Left lung (tissue), 14 donors: ENCODE measurements at regions of chr7 and their contacts with region 1.

Region 1: DNA sequence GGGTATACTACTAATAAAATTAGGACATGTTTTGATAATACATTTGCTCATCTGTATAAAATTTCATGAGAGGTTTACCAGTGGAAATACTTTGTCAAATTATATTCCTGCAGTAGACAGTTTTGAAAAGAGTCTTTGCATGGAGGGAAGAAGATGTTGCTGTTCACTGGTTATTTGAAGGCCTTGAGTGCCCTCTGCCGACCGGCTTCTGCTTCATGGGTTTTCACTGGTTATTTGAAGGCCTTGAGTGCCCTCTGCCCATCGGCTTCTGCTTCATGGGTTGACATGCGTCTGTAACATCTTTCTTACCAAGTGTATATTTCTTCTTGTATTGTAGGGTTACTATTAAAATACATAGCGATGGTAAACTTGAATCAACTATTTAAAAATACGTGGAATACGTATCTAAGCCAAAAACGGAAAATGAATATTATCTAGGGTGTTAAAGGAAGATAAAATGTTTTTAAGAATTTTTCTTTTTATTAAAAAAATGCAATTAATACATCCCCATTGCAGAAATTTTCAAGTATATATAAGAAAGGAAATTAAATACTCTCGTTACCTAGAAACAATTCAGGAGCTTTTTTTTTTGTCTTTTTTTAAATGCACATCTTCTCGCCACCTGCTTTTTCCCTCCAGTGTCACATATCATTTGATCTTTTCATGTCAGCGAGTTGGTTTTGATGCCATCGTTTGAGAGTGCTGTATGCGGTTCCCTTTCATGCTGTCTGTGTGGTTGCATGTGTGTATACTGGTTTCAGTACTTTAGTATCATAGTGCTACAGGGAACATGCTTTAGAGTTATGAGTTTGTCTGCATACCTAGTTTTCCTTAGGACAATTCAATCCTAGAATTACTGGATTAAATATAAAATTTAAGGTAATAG is 73.4 kb downstream of the SHH start:
- DNase-seq: peak in 3 of 4 donors; percentile 44 to 76 (median 69)
- ATAC-seq: peak; percentile 88
- H3K4me3 ChIP-seq: no peak overlapping the region
- H3K27ac ChIP-seq: no peak overlapping the region
- H3K4me1 ChIP-seq: peaks cover 0 to 11% of the 10 kb centered on the region in 2 donors
- H3K27me3 ChIP-seq: no peaks in the 10 kb centered on the region
- CTCF ChIP-seq: peak; percentile 35 to 56

Region 2: GRCh38 chr7:155598810-155599210 is 140.1 kb before region 1 on chr7:
- intact Hi-C with region 1: loop called in 1 of 2 experiments (anchors 5 kb)
- DNase-seq: peak; percentile 68 to 94 (median 78)
- ATAC-seq: peak; percentile 87
- H3K4me3 ChIP-seq: no peak overlapping the region
- H3K27ac ChIP-seq: no peak overlapping the region
- H3K4me1 ChIP-seq: peaks cover 0 to 37% of the 10 kb centered on the region in 2 donors
- H3K27me3 ChIP-seq: peaks cover 0 to 12% of the 10 kb centered on the region in 2 donors
- CTCF ChIP-seq: peak; percentile 97 to 99

Region 3: DNA sequence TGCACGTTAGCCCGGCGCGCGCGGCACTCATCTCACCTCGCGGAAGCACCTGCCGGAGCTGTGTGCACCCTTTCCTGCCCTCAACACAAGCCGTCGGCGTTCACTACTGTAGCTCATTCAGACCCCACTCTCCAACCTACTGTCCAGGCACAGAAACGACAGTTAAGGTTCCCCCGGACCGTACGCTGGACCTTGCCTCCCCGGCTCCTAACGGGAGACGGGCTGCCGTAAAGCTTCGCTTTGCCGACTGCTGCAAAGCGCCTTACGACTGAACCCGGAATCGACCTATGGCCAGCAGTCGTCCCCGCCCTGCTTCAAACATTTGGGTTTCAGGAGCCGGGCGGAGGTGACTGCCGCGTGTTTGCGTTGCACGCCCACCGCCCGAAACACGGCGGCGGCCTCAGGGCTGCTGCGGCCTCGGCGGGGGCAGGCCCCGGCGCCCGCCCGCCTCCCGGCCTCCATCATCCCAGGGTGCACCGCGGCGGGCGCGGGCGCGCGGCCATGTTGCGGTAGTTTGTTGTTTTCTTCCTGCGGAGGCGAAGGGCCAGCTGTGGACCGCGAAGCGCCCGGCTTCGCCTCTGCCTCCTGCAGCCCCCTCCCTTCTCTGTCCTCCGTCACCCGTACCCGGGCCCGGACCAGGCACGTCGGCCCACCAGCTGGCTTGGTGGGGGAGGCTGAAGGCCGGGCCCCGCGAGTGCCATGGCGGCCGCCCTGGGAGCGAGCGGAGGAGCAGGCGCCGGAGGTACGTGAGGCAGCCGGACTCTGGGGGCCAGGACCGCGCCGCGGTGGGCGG is 94.5 kb before region 1 on chr7 and contains the start of gene RBM33:
- intact Hi-C with region 1: loop called in 1 of 2 experiments (anchors 10 kb)
- DNase-seq: peak; percentile 80 to 94 (median 84)
- ATAC-seq: peak; percentile 95
- H3K4me3 ChIP-seq: peak within 1 kb of the TSS; percentile 98
- H3K27ac ChIP-seq: peak within 1 kb of the TSS; percentile 95
- H3K4me1 ChIP-seq: peaks cover 9 to 37% of the 10 kb centered on the region in 2 donors
- H3K27me3 ChIP-seq: no peaks in the 10 kb centered on the region
- CTCF ChIP-seq: no peak
- polyA plus RNA-seq, gene RBM33: 35.2 to 56.4 (median 44.5) TPM

Region 4: DNA sequence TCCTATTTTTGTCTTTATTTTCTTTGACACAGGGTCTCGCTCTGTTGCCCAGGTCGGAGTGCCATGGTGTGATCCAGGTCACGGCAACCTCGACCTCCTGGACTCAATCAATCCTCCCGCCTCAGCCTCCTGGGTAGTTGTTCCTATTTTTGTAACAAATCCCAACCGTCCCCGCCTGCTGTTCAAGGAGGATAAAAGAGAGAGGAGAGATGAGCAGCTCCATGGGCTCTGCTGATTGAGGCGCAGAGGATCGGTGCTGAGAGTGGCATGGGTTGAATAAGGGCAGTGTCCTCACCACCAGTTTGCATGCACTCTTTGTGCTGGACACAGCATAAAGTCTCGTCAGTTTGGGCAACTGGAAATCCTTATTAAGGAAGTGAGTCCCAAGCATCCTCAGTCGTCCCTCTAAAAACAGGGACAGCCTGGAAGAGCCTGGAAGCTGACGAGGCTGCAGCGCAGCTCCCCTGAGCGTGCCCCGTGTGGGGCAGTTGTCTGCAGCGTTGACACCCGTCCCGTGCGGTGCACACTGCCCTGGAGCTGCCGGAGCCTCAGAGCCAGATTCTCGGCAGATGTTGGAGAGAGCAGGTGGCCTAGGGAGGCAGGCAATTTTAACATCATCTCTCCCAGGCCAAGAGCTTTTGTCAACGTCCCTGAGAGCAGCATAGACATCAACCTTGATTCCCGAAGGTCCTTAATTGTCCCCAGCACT is 497.4 kb after region 1 on chr7:
- intact Hi-C with region 1: no loop called
- DNase-seq: no peak
- ATAC-seq: no peak
- H3K4me3 ChIP-seq: no peak overlapping the region
- H3K27ac ChIP-seq: no peak overlapping the region
- H3K4me1 ChIP-seq: no peaks in the 10 kb centered on the region
- H3K27me3 ChIP-seq: no peaks in the 10 kb centered on the region
- CTCF ChIP-seq: no peak